ENCODE measurements at regions of chr6 and their contacts with region 1.

Region 1: DNA sequence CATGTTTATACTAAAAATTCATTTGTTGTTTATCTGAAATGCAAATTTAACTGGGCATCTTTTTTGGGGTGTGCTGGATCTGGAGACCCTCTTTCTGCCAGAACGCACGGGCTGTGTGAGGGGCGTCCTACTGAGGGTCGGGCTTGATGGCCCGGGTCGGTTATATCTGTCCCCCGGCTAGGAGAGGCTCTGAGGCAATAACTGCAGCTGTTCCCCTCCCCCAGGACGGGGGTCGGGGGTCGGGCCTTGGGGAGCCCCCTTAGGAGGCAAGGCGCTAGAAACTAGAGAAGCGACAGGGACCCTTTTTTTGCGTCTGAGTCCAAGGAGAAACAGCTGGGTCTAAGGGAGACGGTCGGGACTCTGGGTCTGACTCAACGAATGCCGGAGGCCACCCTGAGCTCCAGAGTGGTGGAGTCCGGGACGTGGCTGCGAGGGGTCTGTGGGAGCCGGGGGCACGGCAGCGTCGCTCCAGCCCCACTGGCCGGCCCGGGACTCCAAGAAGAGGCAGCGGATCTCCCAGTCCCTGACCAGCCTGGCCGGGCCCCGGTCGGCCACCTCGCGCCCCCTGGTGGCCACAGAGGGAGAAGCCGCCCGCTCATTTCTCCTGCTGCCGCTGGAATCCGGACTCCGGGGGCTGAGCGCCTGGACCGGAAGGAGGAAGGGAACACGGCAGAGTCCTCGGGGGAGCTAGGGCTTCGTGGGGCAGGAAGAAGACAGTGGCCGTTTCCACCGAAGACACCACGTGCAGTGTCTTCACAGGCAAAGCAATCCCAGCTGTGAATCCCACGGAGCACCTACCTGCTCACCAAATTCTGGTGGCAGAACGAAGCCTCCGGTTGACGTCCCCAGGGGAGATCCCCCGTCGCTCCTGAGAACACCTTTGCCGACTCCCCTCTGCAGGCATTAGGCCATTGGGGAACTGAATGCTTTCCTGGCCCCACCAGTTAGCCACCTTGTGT is 24.0 kb upstream of the SCML4 start:
- DNase-seq: peak; percentile 85
- H3K4me3 Mint-ChIP-seq: peak overlapping the region; percentile 71
- H3K27ac Mint-ChIP-seq: peak overlapping the region; percentile 64
- H3K4me1 Mint-ChIP-seq: peaks cover 35% of the 10 kb centered on the region
- H3K27me3 Mint-ChIP-seq: peaks cover 37% of the 10 kb centered on the region

Region 2: DNA sequence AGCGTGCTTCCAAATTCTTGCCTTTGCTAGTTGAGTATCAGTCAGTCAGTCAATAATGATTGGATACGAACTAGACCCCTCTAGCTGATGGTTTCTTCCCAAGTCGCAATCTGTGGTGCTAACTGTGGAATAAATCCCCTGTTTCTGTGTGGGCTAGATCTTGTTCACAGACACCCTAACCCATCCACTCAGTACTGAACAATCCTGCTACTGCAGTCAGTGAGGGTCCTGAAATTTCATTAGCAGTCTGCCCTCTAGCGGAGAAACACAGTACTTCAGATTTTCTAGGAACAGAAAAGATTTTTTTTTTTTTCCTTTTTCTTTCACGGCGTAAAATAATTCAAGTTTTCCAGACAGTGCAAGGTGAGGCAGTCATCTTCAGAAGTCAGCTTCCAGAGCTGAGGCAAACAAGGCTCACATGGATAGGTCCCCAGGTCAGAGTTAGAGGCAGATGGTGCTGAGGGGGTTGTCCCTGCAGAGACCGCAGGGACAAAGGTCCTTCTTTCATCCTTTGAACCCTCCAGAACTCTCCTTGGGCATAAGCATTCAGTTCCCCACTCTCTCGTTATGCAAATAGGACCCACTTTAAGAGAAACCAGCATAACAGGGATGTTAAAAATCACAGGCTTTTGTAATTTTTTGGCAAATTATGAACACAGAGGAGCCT is 143.6 kb before region 1 on chr6:
- CTCF ChIA-PET with region 1: interaction called, 10 read pairs
- DNase-seq: peak; percentile 35
- H3K4me3 Mint-ChIP-seq: no peak overlapping the region
- H3K27ac Mint-ChIP-seq: peak overlapping the region; percentile 8
- H3K4me1 Mint-ChIP-seq: peaks cover 17% of the 10 kb centered on the region
- H3K27me3 Mint-ChIP-seq: peaks cover 4% of the 10 kb centered on the region

Region 3: GRCh38 chr6:107720717-107721116 is 127.4 kb before region 1 on chr6:
- CTCF ChIA-PET with region 1: interaction called, 10 read pairs
- DNase-seq: no peak
- H3K4me3 Mint-ChIP-seq: no peak overlapping the region
- H3K27ac Mint-ChIP-seq: no peak overlapping the region
- H3K4me1 Mint-ChIP-seq: peaks cover 67% of the 10 kb centered on the region
- H3K27me3 Mint-ChIP-seq: no peaks in the 10 kb centered on the region

Region 4: GRCh38 chr6:107740496-107741190 is 107.5 kb before region 1 on chr6:
- CTCF ChIA-PET with region 1: interaction called, 17 read pairs
- DNase-seq: peak; percentile 70
- H3K4me3 Mint-ChIP-seq: peak overlapping the region; percentile 55
- H3K27ac Mint-ChIP-seq: peak overlapping the region; percentile 91
- H3K4me1 Mint-ChIP-seq: peaks cover 69% of the 10 kb centered on the region
- H3K27me3 Mint-ChIP-seq: no peaks in the 10 kb centered on the region

Region 5: DNA sequence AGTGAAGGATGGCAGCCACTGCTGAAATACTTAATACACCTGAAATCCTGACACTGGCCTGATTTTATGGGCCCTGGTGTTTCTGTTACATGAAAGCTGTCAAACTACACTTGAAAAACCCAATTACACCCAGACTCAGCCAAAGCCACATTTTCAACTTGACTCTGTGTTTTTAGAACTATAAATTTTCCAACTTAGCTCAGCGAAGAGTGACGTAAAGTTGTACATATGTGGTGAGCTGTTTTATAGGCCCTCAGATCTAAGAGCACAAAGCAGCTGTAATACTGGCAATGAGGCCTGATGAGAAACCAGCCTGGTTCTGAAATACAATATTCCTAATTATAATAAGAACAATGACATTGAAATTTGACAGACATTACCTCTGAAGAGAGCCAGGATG is 42.6 kb before region 1 on chr6:
- CTCF ChIA-PET with region 1: interaction called, 17 read pairs
- DNase-seq: no peak
- H3K4me3 Mint-ChIP-seq: no peak overlapping the region
- H3K27ac Mint-ChIP-seq: no peak overlapping the region
- H3K4me1 Mint-ChIP-seq: peaks cover 30% of the 10 kb centered on the region
- H3K27me3 Mint-ChIP-seq: no peaks in the 10 kb centered on the region

Region 6: GRCh38 chr6:107820338-107821261 is 27.5 kb before region 1 on chr6:
- CTCF ChIA-PET with region 1: interaction called, 70 read pairs
- DNase-seq: peak; percentile 70
- H3K4me3 Mint-ChIP-seq: peak overlapping the region; percentile 92
- H3K27ac Mint-ChIP-seq: peak overlapping the region; percentile 100
- H3K4me1 Mint-ChIP-seq: peaks cover 85% of the 10 kb centered on the region
- H3K27me3 Mint-ChIP-seq: no peaks in the 10 kb centered on the region

Region 7: GRCh38 chr6:107866606-107867301 is 18.6 kb after region 1 on chr6:
- CTCF ChIA-PET with region 1: interaction called, 48 read pairs
- DNase-seq: peak; percentile 56
- H3K4me3 Mint-ChIP-seq: no peak overlapping the region
- H3K27ac Mint-ChIP-seq: no peak overlapping the region
- H3K4me1 Mint-ChIP-seq: peaks cover 12% of the 10 kb centered on the region
- H3K27me3 Mint-ChIP-seq: peaks cover 8% of the 10 kb centered on the region

Region 8: GRCh38 chr6:107877968-107878367 is 29.8 kb after region 1 on chr6:
- CTCF ChIA-PET with region 1: no interaction called
- DNase-seq: no peak
- H3K4me3 Mint-ChIP-seq: no peak overlapping the region
- H3K27ac Mint-ChIP-seq: no peak overlapping the region
- H3K4me1 Mint-ChIP-seq: no peaks in the 10 kb centered on the region
- H3K27me3 Mint-ChIP-seq: no peaks in the 10 kb centered on the region

Region 9: DNA sequence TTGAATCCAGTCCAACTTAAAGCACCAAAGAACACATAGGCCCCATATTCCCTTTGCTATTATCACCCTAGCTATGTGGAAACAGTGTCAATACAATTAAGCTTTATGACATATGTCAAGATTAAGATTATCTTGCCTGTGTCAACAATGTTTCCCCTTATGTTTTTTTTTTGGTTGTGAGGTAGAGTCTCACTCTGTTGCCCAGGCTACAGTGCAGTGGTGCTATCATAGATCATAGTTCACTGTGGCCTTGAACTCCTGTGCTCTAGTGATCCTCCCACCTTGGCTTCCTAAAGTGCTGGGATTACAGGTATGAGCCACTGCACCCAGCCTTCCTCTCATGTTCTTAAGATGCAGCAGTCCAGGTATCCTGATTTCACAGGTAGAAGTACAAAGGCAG is 464.5 kb after region 1 on chr6:
- CTCF ChIA-PET with region 1: no interaction called
- DNase-seq: no peak
- H3K4me3 Mint-ChIP-seq: no peak overlapping the region
- H3K27ac Mint-ChIP-seq: no peak overlapping the region
- H3K4me1 Mint-ChIP-seq: peaks cover 7% of the 10 kb centered on the region
- H3K27me3 Mint-ChIP-seq: no peaks in the 10 kb centered on the region

Measured in activated naive CD4-positive, alpha-beta T cell treated with anti-CD3 and anti-CD28 coated beads, Interleukin-2, amount 10 ng/mL, durations not matched to agents 7 days and 5 days (primary cell).